SK-N-SH (cell line): ENCODE measurements at regions of chr3 and their contacts with region 1.

Region 1: DNA sequence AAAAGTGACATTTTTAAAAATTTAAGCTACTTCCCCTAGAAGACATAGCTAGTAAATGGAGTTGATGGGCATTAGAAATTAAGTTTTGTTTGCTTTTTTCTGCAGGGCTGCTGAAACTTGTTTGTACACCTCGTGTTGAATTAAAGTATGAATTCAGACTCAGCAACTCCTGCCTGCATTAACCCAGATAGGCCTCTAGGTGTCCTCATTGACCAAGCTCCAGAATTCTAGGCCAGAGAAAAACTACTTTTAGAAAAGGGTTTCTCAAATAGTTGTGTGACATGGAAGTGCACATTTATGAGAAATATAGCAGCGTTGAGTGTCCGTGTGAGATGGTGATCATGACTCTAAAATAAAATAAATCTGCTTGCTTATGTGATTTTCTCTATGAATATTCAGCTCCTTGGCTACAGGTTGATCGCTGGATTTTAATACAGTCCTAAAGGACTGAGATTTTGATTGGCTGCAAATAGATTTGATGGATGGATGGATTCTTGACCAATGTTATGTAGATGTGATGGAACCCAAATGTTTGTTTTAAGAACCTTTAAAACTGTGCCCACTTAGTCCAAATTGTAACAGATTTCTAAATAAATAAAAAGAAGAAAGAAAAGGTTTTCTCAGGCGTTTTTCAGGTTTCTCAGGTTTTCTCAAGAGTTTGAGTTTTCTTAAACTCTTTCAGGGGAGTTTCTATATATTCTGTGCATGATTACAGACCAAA is 39.4 kb upstream of the LMOD3 start:
- DNase-seq: peak; percentile 51
- H3K4me3 ChIP-seq: peak overlapping the region in 1 of 2 experiments; percentile 30; a peak in 1 of 4 replicates
- H3K27ac ChIP-seq: no peak overlapping the region
- H3K4me1 ChIP-seq: no peaks in the 10 kb centered on the region
- H3K27me3 ChIP-seq: no peaks in the 10 kb centered on the region
- CTCF ChIP-seq: peak; percentile 98
- EP300 ChIP-seq: no peak
- RAD21 ChIP-seq: peak; percentile 99

Region 2: DNA sequence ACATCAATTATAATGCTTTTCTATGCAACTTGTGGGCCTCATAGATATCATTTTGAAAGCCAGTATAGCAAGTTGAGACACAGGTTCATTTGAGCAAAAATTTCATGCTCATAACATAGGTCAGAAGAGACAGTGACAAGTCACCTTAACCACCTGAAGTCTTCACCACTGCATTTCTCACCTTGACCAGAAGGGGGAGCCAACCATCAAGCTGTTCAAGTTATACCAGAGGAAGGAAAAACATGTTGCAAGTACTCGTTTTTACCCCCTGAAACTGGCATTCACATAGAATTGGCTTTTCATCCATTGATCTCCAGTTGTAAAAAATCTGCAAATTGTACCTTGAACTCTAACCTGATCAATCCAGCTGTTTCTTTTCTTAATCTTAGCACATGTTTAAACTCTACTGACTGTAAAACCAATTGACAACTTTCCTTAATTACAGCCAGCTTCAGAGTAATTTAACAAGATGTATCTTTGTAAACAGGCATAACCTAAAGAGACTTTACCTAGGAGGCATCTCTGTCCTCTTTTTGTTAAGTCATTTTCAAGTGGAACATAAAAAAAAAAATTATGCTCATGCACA is 40.8 kb before region 1 on chr3:
- CTCF ChIA-PET with region 1: interaction called, 58 read pairs
- POLR2A ChIA-PET with region 1: no interaction called
- DNase-seq: peak; percentile 37
- H3K4me3 ChIP-seq: no peak overlapping the region; a peak in 1 of 4 replicates
- H3K27ac ChIP-seq: no peak overlapping the region
- H3K4me1 ChIP-seq: no peaks in the 10 kb centered on the region
- H3K27me3 ChIP-seq: no peaks in the 10 kb centered on the region
- CTCF ChIP-seq: peak; percentile 97
- EP300 ChIP-seq: no peak
- RAD21 ChIP-seq: peak; percentile 86

Region 3: DNA sequence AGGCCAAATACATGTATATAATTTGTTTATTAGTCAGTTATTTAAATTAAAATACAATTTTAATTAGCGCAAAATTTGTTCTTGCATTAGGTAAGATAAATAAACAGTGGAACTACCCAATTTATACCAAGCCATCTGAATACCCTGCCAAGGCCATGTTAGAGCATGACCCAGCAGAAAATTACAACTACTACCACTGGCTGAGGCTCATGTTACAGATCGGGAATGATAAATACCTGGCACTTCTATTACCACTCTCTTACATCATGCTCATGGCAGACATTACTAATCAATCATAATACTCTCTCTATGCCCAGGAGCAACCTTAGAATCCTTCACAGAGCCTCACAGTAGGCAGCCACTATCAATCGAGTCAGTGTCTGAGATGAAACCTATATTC is 18.1 kb before region 1 on chr3:
- CTCF ChIA-PET with region 1: interaction called, 10 read pairs
- POLR2A ChIA-PET with region 1: no interaction called
- DNase-seq: no peak
- H3K4me3 ChIP-seq: no peak overlapping the region
- H3K27ac ChIP-seq: no peak overlapping the region
- H3K4me1 ChIP-seq: peaks cover 4 to 15% of the 10 kb centered on the region in 2 experiments; a peak in 3 of 4 replicates
- H3K27me3 ChIP-seq: no peaks in the 10 kb centered on the region
- CTCF ChIP-seq: no peak
- EP300 ChIP-seq: no peak
- RAD21 ChIP-seq: no peak

Region 4: DNA sequence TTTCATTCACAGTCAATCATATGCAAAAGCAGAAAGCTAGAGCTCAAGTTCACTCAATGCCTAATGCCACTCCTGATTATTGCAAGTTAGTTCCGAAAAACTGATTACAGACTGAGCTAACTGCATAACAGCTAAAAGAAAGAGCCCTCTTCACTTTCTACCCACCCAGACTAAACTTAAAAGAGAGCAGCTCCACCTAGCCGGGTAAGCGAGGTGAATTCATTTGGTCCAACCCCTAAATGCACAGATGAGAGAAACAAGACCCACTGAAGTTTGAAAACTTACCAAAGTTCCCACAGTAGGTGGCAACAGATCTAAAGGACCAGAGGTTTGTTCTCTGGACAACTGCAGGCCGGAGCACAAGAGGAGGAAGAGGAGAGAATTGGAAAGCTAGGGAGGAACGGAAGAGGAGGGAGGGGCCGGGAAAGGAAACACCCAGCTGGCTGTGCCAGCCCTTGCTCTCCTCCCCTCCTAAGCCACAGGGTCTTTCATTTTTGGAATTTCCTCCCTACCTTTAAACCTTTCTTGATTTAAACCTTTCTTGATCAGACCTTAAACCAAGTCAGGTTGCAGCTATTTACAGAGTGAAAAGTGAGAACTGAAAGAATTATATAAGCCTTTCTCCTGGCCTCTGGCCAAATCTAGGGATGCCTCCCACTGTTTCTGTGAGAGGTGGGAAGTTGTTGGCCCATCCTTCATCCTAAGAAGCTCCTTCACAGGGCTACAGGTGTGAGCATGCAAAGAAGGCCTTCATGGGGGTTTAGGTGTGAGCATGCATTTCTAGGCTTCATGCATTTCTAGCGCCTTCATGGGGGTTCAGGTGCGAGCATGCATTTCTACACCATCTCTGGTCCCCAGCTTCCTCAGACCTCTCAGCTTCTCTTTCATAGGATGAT is 75.3 kb after region 1 on chr3:
- CTCF ChIA-PET with region 1: interaction called, 18 read pairs
- POLR2A ChIA-PET with region 1: no interaction called
- DNase-seq: no peak
- H3K4me3 ChIP-seq: no peak overlapping the region
- H3K27ac ChIP-seq: no peak overlapping the region
- H3K4me1 ChIP-seq: peaks cover 0 to 3% of the 10 kb centered on the region in 2 experiments; a peak in 1 of 4 replicates
- H3K27me3 ChIP-seq: no peaks in the 10 kb centered on the region
- CTCF ChIP-seq: no peak
- EP300 ChIP-seq: no peak
- RAD21 ChIP-seq: no peak

Region 5: DNA sequence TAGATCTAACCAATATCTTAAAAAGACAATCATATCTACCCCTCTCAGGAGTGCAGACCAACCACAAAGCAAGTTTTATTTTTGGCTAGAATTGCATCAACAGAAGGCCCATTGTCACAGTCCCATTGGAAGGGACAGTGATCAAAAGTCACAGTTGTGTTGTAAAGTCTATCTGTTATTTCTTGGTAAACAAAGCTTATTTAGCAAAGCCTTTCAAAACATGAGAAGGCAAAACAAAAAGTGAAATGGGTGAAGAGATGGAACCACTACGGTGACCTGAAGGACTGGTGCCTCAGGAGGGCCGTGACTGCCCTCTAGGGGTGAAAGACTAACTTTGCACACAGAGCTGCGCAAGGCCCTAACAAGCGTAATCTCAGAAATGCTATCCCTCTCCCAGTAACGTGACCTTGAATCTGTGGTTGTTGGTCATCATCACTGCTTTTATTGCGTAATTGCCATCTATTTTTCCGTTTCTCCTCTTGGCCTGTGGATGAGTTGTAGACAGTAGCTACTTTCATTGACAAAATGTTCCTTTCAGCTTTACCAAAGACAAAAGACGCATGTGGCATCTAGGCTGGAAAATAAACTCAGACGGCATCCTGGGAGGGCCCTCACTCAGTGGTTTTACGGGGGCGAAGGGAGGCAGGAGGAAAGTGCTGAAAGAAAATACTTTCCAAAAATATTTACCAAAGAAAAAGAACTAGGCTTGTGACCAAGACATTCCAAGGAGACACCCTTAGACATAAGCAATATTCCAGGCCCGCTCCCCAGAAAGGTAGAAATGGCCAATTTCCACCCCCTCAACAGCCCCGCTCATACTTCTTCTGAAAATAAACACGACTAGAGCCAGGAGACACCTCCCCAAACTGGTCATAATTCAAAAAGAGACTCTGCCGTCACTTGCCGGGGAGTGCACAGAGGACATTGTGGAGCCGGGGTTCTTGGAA is 144.8 kb after region 1 on chr3:
- CTCF ChIA-PET with region 1: interaction called, 315 read pairs
- POLR2A ChIA-PET with region 1: interaction called, 4 read pairs
- DNase-seq: peak; percentile 63
- H3K4me3 ChIP-seq: peak overlapping the region in 1 of 2 experiments; percentile 28; a peak in 1 of 4 replicates
- H3K27ac ChIP-seq: no peak overlapping the region
- H3K4me1 ChIP-seq: no peaks in the 10 kb centered on the region
- H3K27me3 ChIP-seq: no peaks in the 10 kb centered on the region
- CTCF ChIP-seq: peak; percentile 93
- EP300 ChIP-seq: no peak
- RAD21 ChIP-seq: peak; percentile 98

Region 6: DNA sequence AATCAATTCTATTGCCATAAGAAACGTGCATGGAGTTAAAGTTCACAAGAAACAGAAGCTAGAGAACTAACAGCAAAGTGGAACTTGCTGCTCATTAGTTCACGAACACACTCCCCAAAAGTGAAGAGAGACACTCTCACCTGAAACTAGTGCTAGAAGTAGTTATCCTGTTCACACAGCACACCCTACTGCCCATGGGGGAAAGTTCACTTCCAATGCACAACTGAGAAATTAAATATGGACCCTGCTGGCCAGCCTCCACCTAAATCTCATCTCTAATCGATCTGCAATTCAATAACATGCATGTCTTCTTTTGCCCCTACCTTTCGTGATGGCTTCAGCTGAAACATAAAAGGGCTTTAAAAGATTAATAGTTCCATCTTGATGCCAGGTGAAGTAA is 263.5 kb after region 1 on chr3:
- CTCF ChIA-PET with region 1: interaction called, 22 read pairs
- POLR2A ChIA-PET with region 1: no interaction called
- DNase-seq: peak; percentile 29
- H3K4me3 ChIP-seq: no peak overlapping the region
- H3K27ac ChIP-seq: no peak overlapping the region
- H3K4me1 ChIP-seq: peaks cover 12 to 23% of the 10 kb centered on the region in 2 experiments; a peak in 3 of 4 replicates
- H3K27me3 ChIP-seq: no peaks in the 10 kb centered on the region
- CTCF ChIP-seq: peak; percentile 82
- EP300 ChIP-seq: no peak
- RAD21 ChIP-seq: peak; percentile 81

Region 7: DNA sequence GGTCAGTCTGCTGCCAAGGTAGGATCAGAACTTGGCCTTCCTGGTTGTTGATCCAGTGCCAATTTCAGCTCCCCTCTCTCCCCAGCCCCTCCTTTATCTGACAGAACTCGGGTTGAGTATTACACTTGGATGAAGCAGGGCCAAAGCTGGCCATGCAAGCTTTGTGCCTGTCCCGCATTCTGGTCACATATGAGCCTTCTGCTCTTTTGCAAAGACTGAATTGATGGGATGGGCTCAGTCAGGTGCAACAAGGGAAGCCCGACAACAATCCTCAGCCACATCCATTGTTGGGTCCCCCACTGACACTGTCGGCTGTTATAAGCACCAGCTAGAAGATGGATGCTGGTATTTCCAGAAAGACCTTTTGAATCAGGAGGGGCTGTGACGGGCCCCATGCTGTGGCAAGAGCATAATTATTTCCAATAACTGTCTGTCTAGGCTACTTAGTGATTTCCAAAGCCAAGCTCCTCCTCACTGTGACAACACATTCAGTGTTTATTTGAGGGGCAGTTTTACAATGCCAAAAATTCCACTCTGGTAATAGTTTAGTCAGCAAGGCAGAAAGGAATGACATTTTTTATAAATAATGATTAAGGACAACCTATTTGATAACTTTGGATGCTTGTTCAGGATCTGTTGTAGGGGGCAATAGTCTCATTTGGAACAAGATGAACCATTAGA is 370.9 kb after region 1 on chr3:
- CTCF ChIA-PET with region 1: interaction called, 13 read pairs
- POLR2A ChIA-PET with region 1: no interaction called
- DNase-seq: peak; percentile 72
- H3K4me3 ChIP-seq: no peak overlapping the region; a peak in 1 of 4 replicates
- H3K27ac ChIP-seq: peak overlapping the region in 1 of 2 experiments; percentile 67; a peak in 2 of 4 replicates
- H3K4me1 ChIP-seq: peaks cover 0 to 20% of the 10 kb centered on the region in 2 experiments; a peak in 2 of 4 replicates
- H3K27me3 ChIP-seq: no peaks in the 10 kb centered on the region
- CTCF ChIP-seq: no peak
- EP300 ChIP-seq: no peak
- RAD21 ChIP-seq: no peak

Region 8: DNA sequence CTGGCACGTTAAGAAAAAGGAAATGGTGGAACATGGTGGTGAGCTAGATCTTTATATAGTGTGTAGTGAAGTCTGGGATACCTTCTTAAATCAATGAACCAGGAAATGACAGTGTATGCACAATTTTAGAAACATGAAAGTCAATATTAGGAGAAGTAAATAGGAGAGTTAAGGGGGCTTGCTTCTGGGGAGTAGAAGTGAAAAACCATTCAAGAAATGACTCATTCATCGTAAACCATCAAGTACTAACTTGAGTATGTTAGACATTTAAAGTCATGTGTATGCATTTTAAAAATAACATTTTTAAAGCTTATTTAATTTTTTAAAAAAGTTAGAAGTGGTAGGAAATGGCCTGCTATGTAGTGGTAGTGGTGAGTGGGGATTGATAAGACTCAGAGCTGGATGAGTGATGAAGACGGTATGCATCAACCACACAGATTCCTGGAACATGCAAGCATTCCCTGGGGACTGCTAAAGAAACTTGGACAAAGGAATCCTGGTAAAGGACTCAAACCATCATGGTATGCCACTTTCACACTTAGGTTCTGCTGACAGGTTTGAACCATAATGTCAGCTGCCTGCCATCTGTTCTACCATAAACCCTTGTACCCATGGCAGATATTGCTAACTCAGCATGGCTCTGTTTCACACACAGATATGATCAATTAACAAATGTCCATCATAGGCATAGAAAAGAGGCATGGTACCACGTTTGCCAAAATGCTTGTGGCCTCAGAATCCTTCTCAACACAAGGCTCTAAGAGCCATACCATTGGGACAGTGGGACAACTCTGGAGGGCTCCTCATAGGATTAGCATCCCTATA is 548.6 kb after region 1 on chr3:
- CTCF ChIA-PET with region 1: no interaction called
- POLR2A ChIA-PET with region 1: no interaction called
- DNase-seq: no peak
- H3K4me3 ChIP-seq: no peak overlapping the region
- H3K27ac ChIP-seq: no peak overlapping the region
- H3K4me1 ChIP-seq: no peaks in the 10 kb centered on the region
- H3K27me3 ChIP-seq: no peaks in the 10 kb centered on the region; the same call in 1 of the 2 replicates
- CTCF ChIP-seq: no peak
- EP300 ChIP-seq: no peak
- RAD21 ChIP-seq: no peak